ENCODE measurements at regions of chr12 and their contacts with region 1.

Region 1: GRCh38 chr12:66693901-66694675 is 15.2 kb upstream of the GRIP1 start:
- DNase-seq: peak; percentile 69
- ATAC-seq: peak; percentile 90
- H3K4me3 ChIP-seq: no peak overlapping the region
- H3K27ac ChIP-seq: no peak overlapping the region
- H3K4me1 ChIP-seq: no peaks in the 10 kb centered on the region
- H3K27me3 ChIP-seq: peaks cover 2% of the 10 kb centered on the region; the same call in 1 of the 2 replicates
- CTCF ChIP-seq: peak; percentile 59
- POLR2A ChIP-seq: no peak
- RAD21 ChIP-seq: peak; percentile 61

Region 2: DNA sequence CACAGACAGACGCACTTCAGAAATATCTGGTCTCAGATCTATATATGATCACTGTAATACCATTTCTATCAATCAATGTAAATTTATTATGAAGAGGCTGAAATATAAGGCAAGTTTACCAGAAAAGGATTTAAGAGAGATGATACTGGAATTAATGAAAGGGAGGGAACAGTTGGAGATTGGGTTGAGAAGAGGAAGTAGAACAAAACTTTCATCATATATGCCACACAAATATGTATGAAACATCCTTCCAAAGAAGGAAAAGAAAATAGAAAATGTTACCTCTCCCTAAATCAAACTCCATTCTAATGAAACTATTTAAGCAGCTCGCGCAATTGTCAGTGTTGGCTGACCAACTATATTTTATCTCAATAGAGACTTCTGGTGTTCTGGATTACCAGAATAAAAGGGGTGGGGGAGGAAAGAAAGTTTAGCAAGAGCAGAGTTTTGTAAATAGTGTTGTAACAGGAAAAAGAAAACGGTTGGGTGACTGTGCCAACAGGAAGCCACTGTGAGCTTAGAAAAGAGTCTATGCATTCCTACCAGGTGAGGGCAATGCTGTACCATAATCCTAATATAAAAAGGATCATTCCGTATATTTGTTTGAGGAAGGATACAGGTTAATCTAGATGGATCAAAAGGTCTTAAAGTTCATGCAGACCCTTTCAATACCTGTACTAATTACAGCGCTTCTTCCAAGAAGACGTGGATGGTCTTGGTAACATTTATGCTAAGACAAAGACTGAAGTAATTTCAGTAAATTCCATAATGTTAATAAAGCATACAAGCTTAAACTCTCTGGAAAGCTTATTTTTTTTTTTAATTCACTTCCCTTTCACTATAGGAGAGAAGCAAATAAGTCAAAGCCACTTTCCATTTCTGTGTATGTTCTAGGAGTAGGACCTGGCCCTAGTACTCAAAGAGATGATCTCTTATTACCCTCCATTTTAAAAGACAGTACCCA is 549.0 kb before region 1 on chr12:
- CTCF ChIA-PET with region 1: no interaction called
- POLR2A ChIA-PET with region 1: no interaction called
- dilution Hi-C with region 1: no loop called
- in situ Hi-C with region 1: no loop called
- intact Hi-C with region 1: loop called (anchors 5 kb)
- DNase-seq: peak; percentile 75
- ATAC-seq: peak; percentile 75
- H3K4me3 ChIP-seq: no peak overlapping the region
- H3K27ac ChIP-seq: no peak overlapping the region
- H3K4me1 ChIP-seq: no peaks in the 10 kb centered on the region
- H3K27me3 ChIP-seq: no peaks in the 10 kb centered on the region
- CTCF ChIP-seq: peak; percentile 70
- POLR2A ChIP-seq: no peak
- RAD21 ChIP-seq: peak; percentile 61

Region 3: GRCh38 chr12:66269757-66270383 is 424.2 kb before region 1 on chr12:
- CTCF ChIA-PET with region 1: interaction called, 4 read pairs
- POLR2A ChIA-PET with region 1: no interaction called
- dilution Hi-C with region 1: no loop called
- in situ Hi-C with region 1: no loop called
- intact Hi-C with region 1: loop called (anchors 2 kb)
- DNase-seq: peak; percentile 62
- ATAC-seq: peak; percentile 92
- H3K4me3 ChIP-seq: no peak overlapping the region
- H3K27ac ChIP-seq: no peak overlapping the region
- H3K4me1 ChIP-seq: no peaks in the 10 kb centered on the region
- H3K27me3 ChIP-seq: peaks cover 15% of the 10 kb centered on the region
- CTCF ChIP-seq: peak; percentile 75
- POLR2A ChIP-seq: no peak
- RAD21 ChIP-seq: peak; percentile 61

Region 4: DNA sequence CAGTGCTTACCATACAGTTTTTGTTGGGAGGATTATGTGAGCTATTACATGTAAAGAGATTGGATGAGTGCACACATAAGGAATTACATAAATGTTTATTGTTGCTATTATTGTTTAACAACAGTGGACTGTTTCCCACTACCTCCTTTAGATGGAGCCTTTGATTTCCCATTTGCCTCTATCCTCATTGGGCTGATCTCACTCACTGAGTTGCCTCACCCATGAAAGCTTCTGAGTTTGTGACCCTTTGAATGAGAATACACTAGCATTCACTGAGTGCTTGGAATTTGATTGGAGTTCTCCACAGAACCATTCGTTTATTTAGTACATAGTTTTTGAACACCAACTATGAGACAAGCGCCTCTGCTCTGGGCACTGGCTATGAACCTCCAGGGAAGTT is 270.8 kb before region 1 on chr12:
- CTCF ChIA-PET with region 1: no interaction called
- POLR2A ChIA-PET with region 1: no interaction called
- dilution Hi-C with region 1: no loop called
- in situ Hi-C with region 1: no loop called
- intact Hi-C with region 1: loop called (anchors 10 kb)
- DNase-seq: no peak
- ATAC-seq: no peak
- H3K4me3 ChIP-seq: no peak overlapping the region
- H3K27ac ChIP-seq: no peak overlapping the region
- H3K4me1 ChIP-seq: no peaks in the 10 kb centered on the region
- H3K27me3 ChIP-seq: peaks cover 4% of the 10 kb centered on the region
- CTCF ChIP-seq: no peak
- POLR2A ChIP-seq: no peak
- RAD21 ChIP-seq: no peak

Region 5: DNA sequence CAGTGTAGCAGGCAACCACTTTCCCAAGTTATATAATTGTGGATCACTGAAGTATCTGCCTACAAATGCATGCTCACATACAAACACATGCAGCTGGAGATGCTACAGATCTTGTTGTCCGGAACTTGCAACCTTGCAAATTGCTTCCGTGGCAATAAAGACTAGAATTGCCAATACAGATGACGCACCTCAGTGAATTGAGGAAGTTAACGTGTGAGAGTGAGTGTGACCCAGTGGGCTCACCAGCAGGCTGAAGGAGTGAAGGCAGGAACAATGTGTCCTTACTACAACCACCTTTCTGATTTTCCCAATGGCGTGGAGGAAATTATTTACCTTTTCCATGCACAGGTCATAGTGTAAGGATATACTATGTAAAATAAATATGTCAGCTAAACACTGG is 74.2 kb after region 1 on chr12:
- CTCF ChIA-PET with region 1: no interaction called
- POLR2A ChIA-PET with region 1: no interaction called
- dilution Hi-C with region 1: no loop called
- in situ Hi-C with region 1: no loop called
- intact Hi-C with region 1: no loop called
- DNase-seq: no peak
- ATAC-seq: no peak
- H3K4me3 ChIP-seq: no peak overlapping the region
- H3K27ac ChIP-seq: no peak overlapping the region
- H3K4me1 ChIP-seq: no peaks in the 10 kb centered on the region
- H3K27me3 ChIP-seq: no peaks in the 10 kb centered on the region
- CTCF ChIP-seq: no peak
- POLR2A ChIP-seq: no peak
- RAD21 ChIP-seq: no peak

Measured in IMR-90 (cell line).